HAP-1 (cell line): ENCODE measurements at regions of chr2 and their contacts with region 1.

Region 1: GRCh38 chr2:219642465-219643080 is 15.1 kb downstream of the SLC4A3 start:
- DNase-seq: peak; percentile 83 to 96
- H3K4me3 ChIP-seq: no peak overlapping the region
- H3K4me1 ChIP-seq: no peaks in the 10 kb centered on the region
- H3K27me3 ChIP-seq: no peaks in the 10 kb centered on the region

Region 2: GRCh38 chr2:219543601-219544358 is 98.8 kb before region 1 on chr2 and contains the starts of genes CHPF and TMEM198:
- in situ Hi-C with region 1: loop called (anchors 5 kb)
- DNase-seq: peak; percentile 97 to 99
- H3K4me3 ChIP-seq: peak within 1 kb of the TSS; percentile 67
- H3K4me1 ChIP-seq: peaks cover 8% of the 10 kb centered on the region; the same call in 1 of the 2 replicates
- H3K27me3 ChIP-seq: no peaks in the 10 kb centered on the region